ENCODE measurements at regions of chr12 and their contacts with region 1.

Region 1: DNA sequence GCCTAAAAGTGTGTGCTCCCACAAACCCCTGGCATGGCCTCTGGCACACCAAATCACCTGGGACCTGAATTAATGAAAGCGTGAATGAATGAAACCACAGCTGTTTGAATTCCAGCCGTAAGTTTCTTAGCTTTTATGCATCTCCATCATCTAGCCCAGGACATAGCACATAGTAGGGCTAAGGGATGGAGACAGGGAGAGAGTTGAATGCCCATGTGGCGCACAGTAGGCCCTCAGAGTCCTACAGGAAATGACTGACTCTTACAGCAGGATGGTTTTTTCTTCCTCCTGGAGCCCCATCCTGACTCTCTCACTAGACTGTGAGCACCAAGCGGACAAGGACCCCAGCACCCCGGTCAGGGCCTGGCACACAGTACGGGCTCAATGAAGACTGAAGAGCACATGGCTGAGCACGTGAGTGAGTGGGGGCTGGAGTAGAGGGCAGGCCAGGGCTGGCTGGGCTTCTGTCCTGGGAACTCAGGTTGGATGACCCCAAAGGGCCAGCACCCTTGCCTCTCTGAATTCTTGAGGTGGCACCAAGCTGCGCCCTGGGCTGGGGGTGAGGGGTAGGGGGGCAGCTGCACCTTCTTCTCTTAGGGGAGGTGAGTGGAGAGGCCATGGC is 351.3 kb downstream of the MED13L start:
- DNase-seq: no peak
- H3K4me3 ChIP-seq: no peak overlapping the region
- H3K27ac ChIP-seq: no peak overlapping the region
- H3K4me1 ChIP-seq: no peaks in the 10 kb centered on the region
- H3K27me3 ChIP-seq: peaks cover 0 to 4% of the 10 kb centered on the region in 2 donors
- CTCF ChIP-seq: no peak
- POLR2A ChIP-seq: no peak

Region 2: DNA sequence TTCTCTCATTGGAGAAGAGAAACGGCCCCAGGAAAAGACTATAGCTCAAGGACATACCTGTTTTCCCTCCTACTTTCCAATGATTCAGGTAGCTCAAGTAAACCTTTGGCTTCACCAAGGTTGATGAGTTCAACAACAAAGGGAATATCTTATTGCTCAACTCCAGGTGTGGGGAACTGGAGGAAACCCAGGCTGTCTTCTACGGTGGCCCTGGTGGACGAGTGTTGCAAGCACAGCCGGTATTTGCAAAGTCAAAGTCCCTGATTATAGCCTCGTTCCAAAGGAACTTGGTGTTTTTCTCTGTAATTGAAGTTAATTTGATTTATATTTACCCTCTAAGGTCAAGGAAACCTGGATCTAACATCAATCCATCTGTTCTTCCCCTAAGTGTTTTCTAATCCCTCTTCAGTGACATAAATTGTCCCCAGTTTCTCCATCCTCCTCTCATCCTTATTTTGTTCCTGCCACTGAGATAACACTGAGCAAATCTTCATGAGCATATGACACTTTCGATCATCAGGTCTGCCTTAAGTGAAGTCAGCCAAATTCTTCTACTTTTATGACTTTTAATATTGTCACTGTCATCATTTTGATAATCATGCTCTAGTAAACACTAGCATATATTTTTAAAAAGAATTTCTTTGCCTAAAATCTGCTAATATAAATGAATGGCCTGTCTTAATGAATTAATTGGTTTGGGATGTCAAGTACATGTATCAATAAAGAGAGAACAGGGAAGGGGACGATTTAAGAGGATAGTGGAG is 1067.6 kb before region 1 on chr12:
- intact Hi-C with region 1: loop called (anchors 5 kb)
- DNase-seq: no peak
- H3K4me3 ChIP-seq: no peak overlapping the region
- H3K27ac ChIP-seq: no peak overlapping the region
- H3K4me1 ChIP-seq: no peaks in the 10 kb centered on the region
- H3K27me3 ChIP-seq: no peaks in the 10 kb centered on the region
- CTCF ChIP-seq: no peak
- POLR2A ChIP-seq: no peak

Region 3: GRCh38 chr12:116416166-116416565 is 490.0 kb after region 1 on chr12:
- intact Hi-C with region 1: no loop called
- DNase-seq: no peak
- H3K4me3 ChIP-seq: no peak overlapping the region
- H3K27ac ChIP-seq: no peak overlapping the region
- H3K4me1 ChIP-seq: no peaks in the 10 kb centered on the region
- H3K27me3 ChIP-seq: no peaks in the 10 kb centered on the region
- CTCF ChIP-seq: no peak
- POLR2A ChIP-seq: no peak